MCF 10A (cell line): ENCODE measurements at regions of chr4 and their contacts with region 1.

Region 1: DNA sequence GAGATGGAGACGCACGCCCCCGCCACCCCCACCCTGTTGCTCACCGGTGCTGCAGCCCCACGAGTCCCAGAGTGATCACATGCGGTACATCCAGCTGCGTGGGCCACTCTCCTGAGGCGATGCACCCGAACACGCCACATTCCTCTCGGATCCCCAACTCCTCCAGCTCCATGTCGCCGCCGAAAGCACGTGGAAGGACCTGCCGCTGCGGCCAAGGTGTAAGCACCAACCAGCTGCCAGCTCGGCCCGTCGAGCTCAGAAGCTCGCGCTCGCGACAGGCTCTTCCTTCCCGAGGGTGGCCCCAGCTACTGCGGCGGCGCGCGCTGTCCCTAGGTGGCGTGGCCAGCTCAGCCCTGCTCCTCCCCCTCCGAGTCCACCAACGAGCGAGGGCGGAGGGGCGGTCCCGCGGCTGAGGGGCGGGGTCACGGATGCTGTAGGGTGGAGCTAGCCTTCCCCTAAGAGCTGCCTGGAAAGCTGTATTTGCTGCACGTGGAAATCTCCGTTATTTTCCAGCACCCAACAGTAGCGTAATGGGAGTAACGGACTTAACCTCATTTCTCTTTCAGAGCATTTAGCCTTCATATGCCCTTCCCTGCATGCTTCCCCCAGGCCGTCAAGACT is at the start of gene PPAT:
- DNase-seq: peak; percentile 98
- H3K4me3 Mint-ChIP-seq: peak within 1 kb of the TSS; percentile 95
- H3K27ac Mint-ChIP-seq: peak within 1 kb of the TSS; percentile 91
- H3K4me1 Mint-ChIP-seq: peaks cover 23% of the 10 kb centered on the region
- H3K27me3 Mint-ChIP-seq: no peaks in the 10 kb centered on the region
- CTCF ChIP-seq: no peak
- total RNA-seq, gene PPAT: 35.0 and 47.0 TPM in 2 replicates

Region 2: DNA sequence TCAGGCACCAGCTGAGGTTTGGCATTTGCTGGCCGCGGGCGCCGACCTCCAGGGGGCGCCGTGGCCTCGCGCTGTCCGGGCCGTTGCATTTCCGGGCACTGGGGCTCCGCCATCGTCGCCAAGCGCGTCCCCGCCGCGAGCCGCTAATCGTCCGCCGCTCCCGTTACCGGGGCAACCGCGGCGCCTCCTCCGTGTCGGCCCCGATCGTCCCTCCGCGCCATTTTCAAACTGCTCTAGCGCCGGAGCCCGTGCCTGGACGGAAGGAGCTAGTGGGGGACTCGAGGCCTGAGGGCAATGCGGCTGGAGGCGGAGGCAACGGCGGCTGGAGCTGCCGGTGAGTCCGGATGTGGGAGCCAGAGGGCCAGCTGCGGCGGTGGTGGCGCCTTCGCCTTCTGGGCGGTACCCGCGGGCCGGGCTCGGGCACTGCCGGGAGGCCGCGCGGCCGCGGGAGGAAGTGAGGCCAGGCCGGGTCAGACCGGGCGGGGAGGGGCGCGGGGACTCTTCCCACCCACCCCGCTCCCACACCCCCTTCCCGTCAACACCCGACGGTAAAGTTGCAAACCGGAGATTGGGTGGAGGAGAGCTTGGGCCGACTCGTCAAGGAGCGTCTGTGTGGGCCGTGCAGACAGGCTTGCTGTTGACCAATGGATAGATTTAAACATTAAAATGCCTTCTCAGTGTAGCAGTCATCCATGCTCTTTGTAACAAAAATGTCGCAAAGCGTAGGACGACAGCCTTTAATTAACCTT is 486.5 kb before region 1 on chr4 and contains the start of gene CEP135:
- CTCF ChIA-PET with region 1: interaction called, 5 read pairs
- POLR2A ChIA-PET with region 1: interaction called, 18 read pairs
- intact Hi-C with region 1: no loop called
- DNase-seq: peak; percentile 90
- H3K4me3 Mint-ChIP-seq: peak within 1 kb of the TSS; percentile 91
- H3K27ac Mint-ChIP-seq: peak within 1 kb of the TSS; percentile 97
- H3K4me1 Mint-ChIP-seq: peaks cover 23% of the 10 kb centered on the region
- H3K27me3 Mint-ChIP-seq: no peaks in the 10 kb centered on the region
- CTCF ChIP-seq: peak; percentile 91
- total RNA-seq, gene CEP135: 12.4 and 14.0 TPM in 2 replicates

Region 3: DNA sequence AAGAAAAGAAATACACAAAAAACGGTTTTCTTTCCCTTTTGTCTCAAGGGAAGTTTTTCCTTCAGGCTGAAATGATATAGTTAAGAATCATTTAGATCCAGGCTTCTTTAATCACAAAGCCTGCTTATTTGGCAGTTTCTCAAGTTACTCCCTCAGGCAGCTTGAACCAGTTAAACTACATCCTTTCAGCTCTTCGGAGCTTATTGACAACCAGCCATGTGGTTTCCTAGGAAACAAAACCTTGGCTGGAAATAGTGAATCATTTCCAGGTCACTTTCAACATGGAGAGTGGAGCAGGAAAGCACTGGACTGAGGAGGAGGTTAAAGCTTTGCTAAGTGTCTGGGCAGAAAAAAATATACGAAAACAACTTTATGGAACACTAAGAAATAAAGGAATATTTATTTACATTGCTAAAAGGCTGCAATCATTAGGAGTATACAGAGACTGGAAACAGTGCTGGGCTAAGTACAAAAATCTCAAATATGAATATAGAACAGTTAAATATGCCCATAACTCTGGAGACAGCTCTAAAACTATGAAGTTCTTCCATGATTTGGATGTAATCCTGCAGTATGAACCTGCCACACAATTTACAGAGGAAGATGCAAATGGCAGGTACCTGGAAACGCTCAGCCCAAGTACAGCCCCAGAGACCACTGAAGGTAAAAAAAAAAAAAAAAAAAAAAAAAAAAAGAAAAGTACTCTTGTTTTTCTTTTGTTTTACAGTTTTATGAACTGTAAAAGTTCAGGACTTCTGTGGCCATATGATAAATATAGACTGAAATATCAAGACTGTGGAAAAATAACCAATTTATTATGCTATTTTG is 25.0 kb before region 1 on chr4:
- CTCF ChIA-PET with region 1: interaction called, 8 read pairs
- POLR2A ChIA-PET with region 1: interaction called, 89 read pairs
- intact Hi-C with region 1: loop called (anchors 2 kb)
- DNase-seq: peak; percentile 96
- H3K4me3 Mint-ChIP-seq: peak overlapping the region; percentile 72
- H3K27ac Mint-ChIP-seq: peak overlapping the region; percentile 98
- H3K4me1 Mint-ChIP-seq: peaks cover 14% of the 10 kb centered on the region
- H3K27me3 Mint-ChIP-seq: no peaks in the 10 kb centered on the region
- CTCF ChIP-seq: no peak

Region 4: DNA sequence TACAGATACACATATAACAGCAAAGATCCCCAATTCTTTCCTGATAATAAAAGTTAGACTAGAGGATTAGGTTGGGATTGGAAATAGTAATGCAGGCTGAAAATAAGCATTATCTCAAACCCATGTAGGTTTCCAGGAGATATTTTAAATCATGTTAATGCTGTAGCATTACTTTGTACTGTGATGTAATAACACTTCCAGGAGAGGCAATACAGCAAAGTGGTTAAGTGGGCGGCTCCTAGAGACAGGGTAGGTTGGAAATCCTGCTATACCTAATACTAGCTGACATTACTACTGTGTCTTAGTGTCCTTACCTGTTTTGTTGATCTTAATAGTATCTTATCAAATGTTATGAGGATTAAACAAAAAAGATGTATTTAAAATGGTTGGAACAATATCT is 10.3 kb after region 1 on chr4:
- CTCF ChIA-PET with region 1: interaction called, 6 read pairs
- POLR2A ChIA-PET with region 1: interaction called, 16 read pairs
- intact Hi-C with region 1: no loop called
- DNase-seq: no peak
- H3K4me3 Mint-ChIP-seq: no peak overlapping the region
- H3K27ac Mint-ChIP-seq: no peak overlapping the region
- H3K4me1 Mint-ChIP-seq: peaks cover 15% of the 10 kb centered on the region
- H3K27me3 Mint-ChIP-seq: no peaks in the 10 kb centered on the region
- CTCF ChIP-seq: no peak

Region 5: DNA sequence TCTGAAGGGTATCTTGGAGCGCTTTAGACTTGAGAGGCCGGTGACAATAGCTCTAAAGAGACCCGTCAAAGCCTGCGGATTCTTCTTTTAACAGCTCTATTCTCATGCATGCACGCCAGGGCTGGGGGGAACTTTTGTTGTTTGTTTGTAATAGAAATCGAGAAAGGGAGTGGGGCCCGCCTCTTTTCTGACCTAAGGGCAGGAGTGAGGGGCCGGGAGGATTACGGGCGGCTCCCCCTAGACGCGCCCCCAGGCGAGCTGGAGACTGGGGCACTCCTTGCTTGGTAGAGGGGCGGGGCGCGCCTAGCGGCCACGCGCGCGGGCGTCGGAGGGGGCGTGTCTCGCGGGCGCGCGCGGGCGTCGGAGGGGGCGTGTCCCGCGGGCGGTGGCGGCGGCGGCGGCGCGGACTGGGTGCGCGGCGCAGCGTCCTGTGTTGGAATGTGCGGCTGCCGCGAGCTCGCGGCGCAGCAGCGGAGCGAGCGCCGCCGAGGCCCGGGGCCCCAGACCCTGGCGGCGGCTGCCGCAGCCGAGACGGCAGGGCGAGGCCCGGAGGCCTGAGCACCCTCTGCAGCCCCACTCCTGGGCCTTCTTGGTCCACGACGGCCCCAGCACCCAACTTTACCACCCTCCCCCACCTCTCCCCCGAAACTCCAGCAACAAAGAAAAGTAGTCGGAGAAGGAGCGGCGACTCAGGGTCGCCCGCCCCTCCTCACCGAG is 472.2 kb after region 1 on chr4 and contains the start of gene REST:
- CTCF ChIA-PET with region 1: no interaction called
- POLR2A ChIA-PET with region 1: interaction called, 35 read pairs
- intact Hi-C with region 1: no loop called
- DNase-seq: peak; percentile 63
- H3K4me3 Mint-ChIP-seq: peak within 1 kb of the TSS; percentile 97
- H3K27ac Mint-ChIP-seq: peak within 1 kb of the TSS; percentile 85
- H3K4me1 Mint-ChIP-seq: peaks cover 18% of the 10 kb centered on the region
- H3K27me3 Mint-ChIP-seq: no peaks in the 10 kb centered on the region
- CTCF ChIP-seq: no peak
- total RNA-seq, gene REST: 50.5 and 51.6 TPM in 2 replicates